ENCODE measurements at regions of chr9 and their contacts with region 1.

Region 1: GRCh38 chr9:123246534-123246933 is 21.9 kb downstream of the STRBP start:
- DNase-seq: no peak
- ATAC-seq: no peak
- H3K4me3 Mint-ChIP-seq: no peak overlapping the region
- H3K27ac Mint-ChIP-seq: peak overlapping the region; percentile 25
- H3K4me1 Mint-ChIP-seq: peaks cover 82% of the 10 kb centered on the region
- H3K27me3 Mint-ChIP-seq: no peaks in the 10 kb centered on the region
- CTCF ChIP-seq: no peak

Region 2: GRCh38 chr9:122190609-122191381 is 1055.7 kb before region 1 on chr9:
- CTCF ChIA-PET with region 1: no interaction called
- POLR2A ChIA-PET with region 1: no interaction called
- intact Hi-C with region 1: no loop called
- DNase-seq: no peak
- ATAC-seq: no peak
- H3K4me3 Mint-ChIP-seq: no peak overlapping the region
- H3K27ac Mint-ChIP-seq: no peak overlapping the region
- H3K4me1 Mint-ChIP-seq: no peaks in the 10 kb centered on the region
- H3K27me3 Mint-ChIP-seq: peaks cover 8% of the 10 kb centered on the region
- CTCF ChIP-seq: no peak

Region 3: DNA sequence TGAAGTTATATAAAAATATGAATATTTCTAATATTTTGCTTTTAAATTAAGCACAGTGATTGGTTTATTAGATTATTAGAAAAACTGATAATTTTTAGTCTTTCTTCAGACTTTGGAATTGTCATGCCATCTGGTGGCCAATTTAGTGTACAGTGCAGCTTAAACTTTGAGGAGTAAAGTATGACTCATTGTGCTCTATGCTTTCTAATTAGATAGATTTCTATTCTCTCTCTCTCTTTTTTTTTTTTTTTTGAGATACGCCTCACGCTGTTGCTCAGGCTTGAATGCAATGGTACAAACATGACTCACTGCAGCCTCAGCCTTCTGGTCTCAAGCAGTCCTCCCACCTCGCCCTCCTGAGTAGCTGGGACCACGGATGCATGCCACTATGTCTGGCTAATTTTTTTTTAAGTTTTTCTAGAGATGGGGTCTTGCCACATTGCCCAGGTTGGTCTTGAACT is 255.1 kb before region 1 on chr9:
- CTCF ChIA-PET with region 1: no interaction called
- POLR2A ChIA-PET with region 1: no interaction called
- intact Hi-C with region 1: no loop called
- DNase-seq: no peak
- ATAC-seq: peak; percentile 95
- H3K4me3 Mint-ChIP-seq: no peak overlapping the region
- H3K27ac Mint-ChIP-seq: no peak overlapping the region
- H3K4me1 Mint-ChIP-seq: peaks cover 4% of the 10 kb centered on the region
- H3K27me3 Mint-ChIP-seq: no peaks in the 10 kb centered on the region
- CTCF ChIP-seq: no peak

Region 4: DNA sequence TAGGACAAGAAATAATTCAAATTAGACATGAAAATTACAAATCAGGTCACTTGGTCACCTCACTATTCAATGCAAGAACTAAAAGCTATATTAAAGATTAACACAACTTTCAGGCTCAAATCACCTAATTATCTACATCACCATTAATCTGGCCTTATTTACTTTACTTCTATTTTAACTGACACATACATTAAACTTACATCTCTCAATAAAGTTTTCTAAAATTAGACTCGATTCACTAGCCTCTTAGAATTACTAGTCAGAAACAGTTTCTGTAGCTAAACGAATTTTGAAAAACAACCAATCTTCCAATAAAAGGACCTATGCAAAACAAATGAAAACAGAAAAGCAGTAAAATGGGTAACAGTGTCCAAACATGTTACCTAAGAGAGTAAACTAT is 16.3 kb after region 1 on chr9:
- CTCF ChIA-PET with region 1: no interaction called
- POLR2A ChIA-PET with region 1: interaction called, 12 read pairs
- intact Hi-C with region 1: no loop called
- DNase-seq: no peak
- ATAC-seq: no peak
- H3K4me3 Mint-ChIP-seq: peak overlapping the region; percentile 45
- H3K27ac Mint-ChIP-seq: peak overlapping the region; percentile 75
- H3K4me1 Mint-ChIP-seq: peaks cover 90% of the 10 kb centered on the region
- H3K27me3 Mint-ChIP-seq: no peaks in the 10 kb centered on the region
- CTCF ChIP-seq: no peak